Activated T-helper 1 cell treated with anti-CD3 and anti-CD28 coated beads, Interleukin-12 subunit alpha, Interleukin-12 subunit beta, Interleukin-2, Interleukin-4 antibody, amounts not matched to agents 30 ng/mL and 10 ng/mL and 1 ng/mL, durations not matched to agents 14 hours and 24 hours and 36 hours (primary cell): ENCODE measurements at regions of chr1 and their contacts with region 1.

Region 1: GRCh38 chr1:109802901-109803561 is 39.3 kb upstream of the EPS8L3 start:
- DNase-seq: no peak
- H3K4me3 Mint-ChIP-seq: peak overlapping the region; percentile 72
- H3K27ac Mint-ChIP-seq: peak overlapping the region; percentile 96
- H3K4me1 Mint-ChIP-seq: peaks cover 87% of the 10 kb centered on the region
- H3K27me3 Mint-ChIP-seq: no peaks in the 10 kb centered on the region

Region 2: DNA sequence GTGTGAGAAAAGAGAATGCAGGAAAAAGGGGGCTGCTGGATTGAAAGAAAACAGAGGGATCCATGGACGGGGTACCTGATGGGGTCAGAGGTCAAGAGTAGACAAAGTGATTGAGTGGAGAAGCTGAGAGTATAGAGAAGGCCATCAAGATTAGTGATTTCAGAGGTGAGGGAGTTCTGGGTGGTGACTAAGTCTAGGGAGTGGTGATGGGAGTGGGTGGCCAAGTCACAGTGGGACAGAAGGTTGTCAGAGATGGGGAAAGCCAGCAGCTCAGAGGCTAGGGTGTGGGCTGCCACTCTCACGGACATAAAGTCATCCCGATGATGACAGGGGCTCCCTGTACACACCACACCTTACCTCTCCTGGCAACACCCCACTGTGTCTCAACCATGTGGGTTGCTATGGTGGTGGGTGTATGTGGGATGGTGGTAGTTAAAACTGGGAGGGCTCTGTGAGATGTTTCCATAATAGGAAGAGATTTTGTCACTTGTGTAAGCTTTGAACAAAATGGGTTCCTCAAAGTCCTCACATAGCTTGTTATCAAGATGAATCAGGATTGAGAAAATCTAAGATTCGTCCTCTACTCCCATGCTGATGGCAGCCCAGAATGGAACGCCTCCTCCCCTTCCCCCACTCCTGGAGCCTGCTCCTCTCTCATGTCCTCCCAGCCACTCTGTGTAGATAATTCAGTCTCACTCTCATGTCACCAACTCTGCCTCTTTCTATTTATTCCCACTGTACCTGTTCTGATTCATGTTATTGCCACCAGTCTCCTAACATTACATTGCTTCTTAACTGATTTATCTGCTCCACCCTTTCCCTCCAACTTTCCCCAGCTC is 87.3 kb after region 1 on chr1:
- intact Hi-C with region 1: loop called (anchors 1 kb)
- DNase-seq: no peak
- H3K4me3 Mint-ChIP-seq: peak overlapping the region; percentile 34
- H3K27ac Mint-ChIP-seq: peak overlapping the region; percentile 85
- H3K4me1 Mint-ChIP-seq: peaks cover 13% of the 10 kb centered on the region
- H3K27me3 Mint-ChIP-seq: no peaks in the 10 kb centered on the region